Mucosa of descending colon (tissue), 3 donors: ENCODE measurements at regions of chr19 and their contacts with region 1.

Region 1: DNA sequence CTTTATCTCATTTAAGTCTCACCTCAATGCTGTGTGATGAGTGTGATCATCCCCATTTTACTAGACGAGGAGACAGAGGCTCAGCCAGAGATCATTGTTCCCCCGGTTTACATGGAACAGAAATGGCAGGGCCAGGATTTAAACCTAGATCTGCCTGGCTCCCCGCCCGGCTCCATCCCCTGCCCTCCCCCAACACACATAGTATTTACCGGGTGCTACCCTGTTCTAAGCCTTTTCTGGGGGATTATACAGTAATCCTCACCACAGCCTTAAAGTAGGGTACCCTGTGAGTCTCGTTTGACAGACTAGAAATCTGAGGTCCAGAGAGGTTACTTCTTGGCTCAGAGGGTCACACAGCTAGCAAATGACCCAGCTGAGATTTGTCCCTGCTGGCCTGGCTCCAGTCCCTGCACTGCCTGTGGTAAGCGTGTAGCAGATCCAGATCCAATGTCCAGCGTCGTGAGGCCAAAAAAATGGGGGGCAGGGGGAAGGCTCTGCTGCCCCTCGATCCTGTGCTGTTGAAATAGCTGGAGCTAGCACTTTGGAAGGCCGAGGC is 3.8 kb upstream of the KLC3 start:
- DNase-seq: no peak
- ATAC-seq: no peak
- H3K4me3 ChIP-seq: no peak overlapping the region
- H3K4me1 ChIP-seq: peaks cover 11% of the 10 kb centered on the region
- CTCF ChIP-seq: no peak

Region 2: GRCh38 chr19:45245334-45245787 is 91.4 kb before region 1 on chr19 and contains the start of gene EXOC3L2:
- intact Hi-C with region 1: loop called in 1 of 2 experiments (anchors 5 kb)
- DNase-seq: no peak
- ATAC-seq: no peak
- H3K4me3 ChIP-seq: no peak within 1 kb of the TSS
- H3K4me1 ChIP-seq: peaks cover 2% of the 10 kb centered on the region
- CTCF ChIP-seq: no peak
- total RNA-seq, gene EXOC3L2: 0.70 to 1.4 (median 1.2) TPM